Right ventricle myocardium inferior (tissue), 1 donor: ENCODE measurements at regions of chr4 and their contacts with region 1.

Region 1: GRCh38 chr4:109406338-109406931 is 27.2 kb upstream of the SEC24B start:
- DNase-seq: no peak
- ATAC-seq: peak; percentile 52

Region 2: DNA sequence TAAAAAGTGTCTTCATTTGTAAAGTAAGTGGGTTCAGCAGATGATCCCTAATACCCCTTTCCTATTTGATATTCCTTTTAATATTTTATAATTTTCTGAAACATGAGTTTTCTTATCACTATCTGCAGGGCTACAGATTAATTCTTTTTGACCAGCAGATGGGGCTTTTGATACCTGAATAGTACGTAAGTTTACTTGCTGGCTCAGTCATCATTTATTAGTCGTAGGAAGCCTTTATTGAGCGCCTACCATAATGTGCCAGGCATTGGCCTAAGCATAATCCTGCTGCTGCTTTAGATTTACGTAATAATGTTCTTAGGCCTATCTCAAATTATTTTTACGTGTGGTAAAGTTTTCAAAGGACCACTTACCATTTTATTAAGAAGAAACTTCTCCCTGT is 723.0 kb before region 1 on chr4:
- intact Hi-C with region 1: loop called (anchors 10 kb)
- DNase-seq: no peak
- ATAC-seq: no peak

Region 3: DNA sequence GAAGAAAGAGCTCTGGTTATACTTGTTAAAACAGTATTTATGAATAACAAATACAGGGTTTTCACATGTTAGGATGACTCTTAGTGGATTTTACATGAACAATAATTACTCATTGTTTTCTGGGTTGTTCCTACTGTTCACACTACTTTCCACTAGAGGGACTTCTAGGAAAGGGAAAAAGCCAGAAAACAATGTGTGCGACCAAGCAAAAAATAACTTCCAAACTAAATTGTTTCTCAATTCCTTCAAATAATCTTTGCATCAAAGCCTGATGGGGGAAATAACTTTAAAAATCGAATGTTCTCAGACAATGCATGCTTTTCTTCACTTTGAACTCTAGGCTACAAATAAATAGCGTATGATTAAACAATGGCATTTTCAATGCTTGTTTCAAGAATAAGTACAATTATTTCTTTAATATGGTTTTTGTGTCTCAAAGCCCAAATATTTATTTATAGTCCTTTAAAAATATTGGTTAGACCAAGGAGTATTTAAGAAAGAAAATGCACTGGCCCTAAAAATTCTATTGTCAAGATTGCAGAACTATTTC is 571.5 kb before region 1 on chr4:
- intact Hi-C with region 1: loop called (anchors 2 kb)
- DNase-seq: no peak
- ATAC-seq: no peak